K562 (cell line): ENCODE measurements at regions of chr12 and their contacts with region 1.

Region 1: GRCh38 chr12:116697305-116697704 is 40.6 kb downstream of the SPRING1 start:
- DNase-seq: peak; percentile 48 to 73 (median 60)
- ATAC-seq: peak; percentile 97
- H3K4me3 ChIP-seq: no peak overlapping the region
- H3K27ac ChIP-seq: no peak overlapping the region
- H3K4me1 ChIP-seq: peaks cover 0 to 7% of the 10 kb centered on the region in 2 experiments; a peak in 1 of 5 replicates
- H3K27me3 ChIP-seq: peaks cover 35 to 44% of the 10 kb centered on the region in 2 experiments
- CTCF ChIP-seq: peak; percentile 71 to 80 (median 77)
- EP300 ChIP-seq: no peak
- POLR2A ChIP-seq: no peak
- RAD21 ChIP-seq: peak; percentile 63 to 81

Region 2: GRCh38 chr12:116615141-116615861 is 82.0 kb before region 1 on chr12:
- CTCF ChIA-PET with region 1: no interaction called
- POLR2A ChIA-PET with region 1: no interaction called
- in situ Hi-C with region 1: no loop called
- intact Hi-C with region 1: loop called (anchors 5 kb)
- DNase-seq: no peak
- ATAC-seq: no peak
- H3K4me3 ChIP-seq: no peak overlapping the region
- H3K27ac ChIP-seq: no peak overlapping the region
- H3K4me1 ChIP-seq: peaks cover 0 to 6% of the 10 kb centered on the region in 2 experiments; a peak in 2 of 5 replicates
- H3K27me3 ChIP-seq: no peaks in the 10 kb centered on the region; a peak in 1 of 5 replicates
- CTCF ChIP-seq: no peak
- EP300 ChIP-seq: no peak
- POLR2A ChIP-seq: no peak
- RAD21 ChIP-seq: no peak

Region 3: DNA sequence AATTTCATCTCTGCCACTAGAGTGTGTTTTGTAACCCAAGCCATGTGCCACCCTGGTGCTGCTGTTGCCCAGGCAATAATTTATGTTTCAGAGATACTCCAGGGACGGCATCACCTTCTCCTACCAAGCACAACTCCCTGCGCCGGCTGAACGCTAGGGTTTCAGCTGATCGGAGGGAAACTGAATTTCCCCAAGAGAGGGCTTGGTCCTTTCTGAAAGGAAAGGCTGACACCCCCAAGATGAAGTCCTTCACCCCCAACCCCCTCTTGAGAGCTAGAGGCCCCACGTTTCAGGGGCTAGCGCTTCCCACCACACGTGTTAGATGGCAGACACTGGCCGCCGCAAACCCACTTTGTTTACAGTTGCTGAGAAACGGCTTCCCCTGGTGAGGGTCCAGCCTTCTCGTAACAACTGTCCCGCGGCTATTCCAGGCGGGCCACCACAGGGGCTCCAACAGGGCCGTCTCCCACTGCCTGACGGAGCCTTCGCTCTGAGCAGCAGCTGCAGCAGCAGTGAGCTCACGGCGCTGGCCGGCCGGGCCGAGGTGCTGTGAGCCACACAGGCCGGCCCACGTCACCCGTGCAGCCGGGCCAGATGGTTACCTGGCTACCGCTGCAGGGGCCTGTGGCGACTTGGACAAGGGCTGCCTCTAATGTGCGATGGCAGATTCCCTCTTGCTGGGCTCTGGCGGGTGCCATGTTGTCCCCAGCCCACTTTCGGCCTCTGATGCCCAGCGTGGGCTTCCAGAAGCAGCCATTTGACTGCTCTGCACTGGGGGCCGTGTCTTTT is 335.5 kb after region 1 on chr12:
- CTCF ChIA-PET with region 1: no interaction called
- POLR2A ChIA-PET with region 1: no interaction called
- in situ Hi-C with region 1: no loop called
- intact Hi-C with region 1: no loop called
- DNase-seq: no peak
- ATAC-seq: no peak
- H3K4me3 ChIP-seq: no peak overlapping the region
- H3K27ac ChIP-seq: no peak overlapping the region
- H3K4me1 ChIP-seq: peaks cover 8 to 35% of the 10 kb centered on the region in 2 experiments; a peak in 4 of 5 replicates
- H3K27me3 ChIP-seq: no peaks in the 10 kb centered on the region
- CTCF ChIP-seq: no peak
- EP300 ChIP-seq: no peak
- POLR2A ChIP-seq: no peak
- RAD21 ChIP-seq: no peak